ENCODE measurements at regions of chr10 and their contacts with region 1.

Region 1: GRCh38 chr10:73625884-73626752 is 15.2 kb downstream of the MYOZ1 start:
- DNase-seq: peak; percentile 76 to 97 (median 91)
- ATAC-seq: peak; percentile 97
- H3K4me3 ChIP-seq: peak overlapping the region; percentile 99
- H3K4me3 Mint-ChIP-seq: peak overlapping the region; percentile 91 to 100 (median 96)
- H3K27ac ChIP-seq: peak overlapping the region; percentile 87
- H3K27ac Mint-ChIP-seq: peak overlapping the region; percentile 95 to 100 (median 97)
- H3K4me1 ChIP-seq: peaks cover 7 to 9% of the 10 kb centered on the region in 2 donors
- H3K4me1 Mint-ChIP-seq: peaks cover 0 to 29% (median 24%) of the 10 kb centered on the region in 7 donors
- H3K27me3 ChIP-seq: no peaks in the 10 kb centered on the region
- H3K27me3 Mint-ChIP-seq: no peaks in the 10 kb centered on the region

Region 2: GRCh38 chr10:71659111-71659634 is 1966.9 kb before region 1 on chr10:
- CTCF ChIA-PET with region 1: no interaction called
- POLR2A ChIA-PET with region 1: no interaction called
- intact Hi-C with region 1: no loop called
- DNase-seq: no peak
- ATAC-seq: no peak
- H3K4me3 ChIP-seq: no peak overlapping the region
- H3K4me3 Mint-ChIP-seq: no peak overlapping the region
- H3K27ac ChIP-seq: no peak overlapping the region
- H3K27ac Mint-ChIP-seq: peak overlapping the region in 1 of 9 donors; percentile 46
- H3K4me1 ChIP-seq: no peaks in the 10 kb centered on the region
- H3K4me1 Mint-ChIP-seq: peaks cover 0 to 2% (median 0%) of the 10 kb centered on the region in 7 donors
- H3K27me3 ChIP-seq: no peaks in the 10 kb centered on the region
- H3K27me3 Mint-ChIP-seq: no peaks in the 10 kb centered on the region

Region 3: GRCh38 chr10:72913287-72913686 is 712.8 kb before region 1 on chr10:
- CTCF ChIA-PET with region 1: no interaction called
- POLR2A ChIA-PET with region 1: no interaction called
- intact Hi-C with region 1: no loop called
- DNase-seq: no peak
- ATAC-seq: no peak
- H3K4me3 ChIP-seq: no peak overlapping the region
- H3K4me3 Mint-ChIP-seq: no peak overlapping the region
- H3K27ac ChIP-seq: no peak overlapping the region
- H3K27ac Mint-ChIP-seq: no peak overlapping the region
- H3K4me1 ChIP-seq: no peaks in the 10 kb centered on the region
- H3K4me1 Mint-ChIP-seq: no peaks in the 10 kb centered on the region
- H3K27me3 ChIP-seq: no peaks in the 10 kb centered on the region
- H3K27me3 Mint-ChIP-seq: peaks cover 0 to 7% (median 3%) of the 10 kb centered on the region in 5 donors

Region 4: DNA sequence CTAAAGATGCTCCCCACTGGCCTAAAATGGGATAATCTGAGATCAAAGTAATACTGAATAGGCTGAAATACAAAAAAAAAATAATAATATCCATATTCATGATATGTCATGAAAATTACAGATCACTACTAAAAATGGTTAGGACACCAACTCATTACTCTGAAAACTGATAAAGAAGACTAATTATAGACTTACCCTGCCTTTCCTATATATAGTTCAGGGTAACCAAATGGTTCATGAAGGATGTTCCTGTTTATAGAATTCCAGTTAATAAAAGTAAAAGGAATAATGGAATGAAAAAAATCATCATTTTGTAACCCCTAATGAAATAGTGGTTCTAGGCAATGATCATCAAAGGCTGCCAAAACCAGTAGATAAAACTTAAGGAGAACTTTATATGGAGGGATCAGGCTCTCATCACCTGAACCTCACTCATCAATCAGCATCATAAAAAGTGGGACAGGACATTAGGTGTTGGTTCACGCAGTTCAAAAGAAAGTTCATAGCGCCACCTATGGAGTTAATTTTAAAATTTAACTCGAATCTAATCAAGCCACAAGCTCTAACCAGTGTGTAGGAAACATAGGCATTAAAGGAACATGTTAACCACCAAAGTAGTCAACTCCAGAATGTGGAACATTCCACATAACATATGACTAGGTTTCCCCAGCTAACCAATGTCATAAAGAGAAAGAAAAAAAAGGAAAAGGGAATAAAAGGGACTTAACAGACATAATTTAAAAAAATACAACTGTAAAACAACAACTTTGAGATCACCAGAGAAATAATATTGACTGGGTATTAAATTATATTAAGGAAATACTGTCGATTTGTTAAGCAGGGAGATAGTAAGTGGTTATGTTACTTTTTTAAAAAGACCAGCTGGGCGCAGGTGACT is 565.1 kb before region 1 on chr10:
- CTCF ChIA-PET with region 1: no interaction called
- POLR2A ChIA-PET with region 1: no interaction called
- intact Hi-C with region 1: no loop called
- DNase-seq: peak in 4 of 9 donors; percentile 4 to 37 (median 12)
- ATAC-seq: peak; percentile 49
- H3K4me3 ChIP-seq: no peak overlapping the region
- H3K4me3 Mint-ChIP-seq: no peak overlapping the region
- H3K27ac ChIP-seq: no peak overlapping the region
- H3K27ac Mint-ChIP-seq: peak overlapping the region in 1 of 9 donors; percentile 21
- H3K4me1 ChIP-seq: peaks cover 0 to 3% of the 10 kb centered on the region in 2 donors
- H3K4me1 Mint-ChIP-seq: peaks cover 4 to 19% (median 10%) of the 10 kb centered on the region in 7 donors
- H3K27me3 ChIP-seq: no peaks in the 10 kb centered on the region
- H3K27me3 Mint-ChIP-seq: no peaks in the 10 kb centered on the region

Region 5: DNA sequence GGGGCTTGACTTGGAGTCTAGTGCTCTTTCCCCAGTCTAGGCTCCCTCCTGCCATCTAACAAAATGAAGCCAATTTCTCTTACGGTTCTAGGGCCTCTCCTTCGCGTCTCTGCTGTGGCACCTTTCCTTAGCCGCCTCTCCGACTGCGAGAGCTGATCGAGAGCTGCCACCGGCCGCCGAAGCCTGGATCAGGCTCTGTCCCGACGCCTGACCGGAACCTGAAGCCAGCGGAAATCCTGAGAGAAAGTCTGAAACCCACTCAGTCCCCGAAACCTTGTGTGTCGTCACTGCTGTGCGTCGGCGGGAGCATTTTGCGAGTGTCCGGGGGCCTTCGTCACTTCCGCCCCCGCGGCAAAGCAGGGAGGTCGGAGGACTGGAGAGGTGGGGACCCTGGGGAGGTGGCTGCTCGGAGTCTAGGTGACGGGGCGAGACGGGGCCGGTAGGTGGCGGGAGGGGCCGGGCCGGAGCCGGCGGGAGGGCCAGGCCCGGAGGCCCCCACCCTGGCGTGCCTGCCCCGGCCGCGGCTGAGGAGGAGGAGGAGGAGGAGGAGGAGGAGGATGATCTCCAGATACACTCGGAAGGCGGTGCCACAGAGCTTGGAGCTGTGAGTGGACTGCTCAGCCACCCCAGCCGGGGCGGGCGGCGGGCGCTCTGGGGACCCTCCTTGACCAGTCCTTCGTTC is 458.2 kb before region 1 on chr10 and contains the starts of genes ECD and FAM149B1:
- CTCF ChIA-PET with region 1: no interaction called
- POLR2A ChIA-PET with region 1: no interaction called
- intact Hi-C with region 1: loop called (anchors 5 kb)
- DNase-seq: peak; percentile 86 to 93 (median 92)
- ATAC-seq: peak; percentile 97
- H3K4me3 ChIP-seq: peak within 1 kb of the TSS; percentile 97
- H3K4me3 Mint-ChIP-seq: peak within 1 kb of the TSS; percentile 92 to 100 (median 100)
- H3K27ac ChIP-seq: peak within 1 kb of the TSS; percentile 95
- H3K27ac Mint-ChIP-seq: peak within 1 kb of the TSS; percentile 98 to 100 (median 99)
- H3K4me1 ChIP-seq: peaks cover 29 to 33% of the 10 kb centered on the region in 2 donors
- H3K4me1 Mint-ChIP-seq: peaks cover 30 to 56% (median 43%) of the 10 kb centered on the region in 7 donors
- H3K27me3 ChIP-seq: no peaks in the 10 kb centered on the region
- H3K27me3 Mint-ChIP-seq: no peaks in the 10 kb centered on the region
- total RNA-seq, gene ECD: 30.2 to 42.7 (median 33.1) TPM
- total RNA-seq, gene FAM149B1: 13.7 to 21.0 (median 16.3) TPM

Region 6: GRCh38 chr10:73358331-73359279 is 267.5 kb before region 1 on chr10 and contains the start of gene CFAP70:
- CTCF ChIA-PET with region 1: no interaction called
- POLR2A ChIA-PET with region 1: no interaction called
- intact Hi-C with region 1: loop called (anchors 1 to 2 kb)
- DNase-seq: peak; percentile 79 to 97 (median 95)
- ATAC-seq: peak; percentile 97
- H3K4me3 ChIP-seq: peak within 1 kb of the TSS; percentile 70
- H3K4me3 Mint-ChIP-seq: peak within 1 kb of the TSS; percentile 91 to 99 (median 94)
- H3K27ac ChIP-seq: peak within 1 kb of the TSS; percentile 85
- H3K27ac Mint-ChIP-seq: peak within 1 kb of the TSS; percentile 92 to 99 (median 97)
- H3K4me1 ChIP-seq: peaks cover 4 to 5% of the 10 kb centered on the region in 2 donors
- H3K4me1 Mint-ChIP-seq: peaks cover 11 to 20% (median 18%) of the 10 kb centered on the region in 7 donors
- H3K27me3 ChIP-seq: no peaks in the 10 kb centered on the region
- H3K27me3 Mint-ChIP-seq: peaks cover 0 to 23% (median 0%) of the 10 kb centered on the region in 5 donors
- total RNA-seq, gene CFAP70: 0.80 to 5.4 (median 4.6) TPM

Region 7: DNA sequence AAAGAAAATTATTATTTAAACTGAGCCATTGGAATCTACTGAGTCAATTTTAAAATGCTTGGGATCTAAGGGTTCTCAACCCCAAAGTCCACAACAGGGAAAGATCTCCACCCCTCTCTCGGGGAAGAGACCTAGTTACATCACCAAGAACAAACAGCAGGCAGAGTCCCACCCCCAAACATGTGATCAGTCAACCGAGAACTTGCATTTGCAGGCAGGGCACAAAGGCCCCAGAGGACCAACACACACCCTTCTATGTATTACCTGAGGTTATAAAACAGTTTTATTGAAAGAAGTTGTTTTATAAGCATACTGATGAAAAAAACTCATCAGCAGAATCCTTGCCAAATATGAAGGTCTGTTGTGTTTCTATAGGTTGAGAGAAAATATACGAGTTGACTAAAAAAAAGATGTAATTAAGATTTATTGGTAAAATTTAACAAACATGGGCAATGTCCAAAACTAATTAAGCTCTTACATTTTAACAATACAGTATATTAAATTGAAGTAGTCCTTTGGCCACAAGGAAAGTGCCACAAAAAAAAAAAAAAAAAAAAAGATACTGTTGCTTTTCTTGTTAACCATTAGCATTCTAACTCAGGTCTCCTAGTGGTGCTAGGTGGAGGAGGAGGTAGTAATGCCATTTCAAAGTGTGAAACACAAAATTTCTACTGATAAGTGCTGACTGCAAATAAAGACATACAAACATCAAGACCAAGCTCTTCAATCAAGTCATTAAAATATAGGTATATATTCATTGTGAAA is 34.0 kb before region 1 on chr10:
- CTCF ChIA-PET with region 1: no interaction called
- POLR2A ChIA-PET with region 1: no interaction called
- intact Hi-C with region 1: loop called (anchors 1 to 2 kb)
- DNase-seq: peak in 4 of 9 donors; percentile 6 to 28 (median 14)
- ATAC-seq: peak; percentile 66
- H3K4me3 ChIP-seq: no peak overlapping the region
- H3K4me3 Mint-ChIP-seq: peak overlapping the region; percentile 34 to 84 (median 70)
- H3K27ac ChIP-seq: peak overlapping the region; percentile 31
- H3K27ac Mint-ChIP-seq: peak overlapping the region; percentile 58 to 84 (median 78)
- H3K4me1 ChIP-seq: peaks cover 0 to 17% of the 10 kb centered on the region in 2 donors
- H3K4me1 Mint-ChIP-seq: peaks cover 12 to 32% (median 27%) of the 10 kb centered on the region in 7 donors
- H3K27me3 ChIP-seq: no peaks in the 10 kb centered on the region
- H3K27me3 Mint-ChIP-seq: no peaks in the 10 kb centered on the region

Region 8: GRCh38 chr10:73772280-73773151 is 146.4 kb after region 1 on chr10:
- CTCF ChIA-PET with region 1: no interaction called
- POLR2A ChIA-PET with region 1: no interaction called
- intact Hi-C with region 1: loop called in 1 of 2 experiments (anchors 2 kb)
- DNase-seq: peak; percentile 75 to 90 (median 83)
- ATAC-seq: peak; percentile 80
- H3K4me3 ChIP-seq: peak overlapping the region; percentile 69
- H3K4me3 Mint-ChIP-seq: peak overlapping the region; percentile 87 to 97 (median 95)
- H3K27ac ChIP-seq: peak overlapping the region; percentile 85
- H3K27ac Mint-ChIP-seq: peak overlapping the region; percentile 89 to 97 (median 94)
- H3K4me1 ChIP-seq: peaks cover 27 to 30% of the 10 kb centered on the region in 2 donors
- H3K4me1 Mint-ChIP-seq: peaks cover 34 to 73% (median 64%) of the 10 kb centered on the region in 7 donors
- H3K27me3 ChIP-seq: no peaks in the 10 kb centered on the region
- H3K27me3 Mint-ChIP-seq: no peaks in the 10 kb centered on the region

Region 9: GRCh38 chr10:73879296-73880173 is 253.4 kb after region 1 on chr10:
- CTCF ChIA-PET with region 1: no interaction called
- POLR2A ChIA-PET with region 1: no interaction called
- intact Hi-C with region 1: loop called in 1 of 2 experiments (anchors 5 kb)
- DNase-seq: peak; percentile 91 to 98 (median 96)
- ATAC-seq: peak; percentile 97
- H3K4me3 ChIP-seq: no peak overlapping the region
- H3K4me3 Mint-ChIP-seq: peak overlapping the region in 5 of 10 donors; percentile 0 to 40 (median 1)
- H3K27ac ChIP-seq: peak overlapping the region; percentile 68
- H3K27ac Mint-ChIP-seq: peak overlapping the region; percentile 30 to 98 (median 89)
- H3K4me1 ChIP-seq: peaks cover 18 to 22% of the 10 kb centered on the region in 2 donors
- H3K4me1 Mint-ChIP-seq: peaks cover 14 to 51% (median 41%) of the 10 kb centered on the region in 7 donors
- H3K27me3 ChIP-seq: no peaks in the 10 kb centered on the region
- H3K27me3 Mint-ChIP-seq: peaks cover 0 to 5% (median 0%) of the 10 kb centered on the region in 5 donors

Region 10: DNA sequence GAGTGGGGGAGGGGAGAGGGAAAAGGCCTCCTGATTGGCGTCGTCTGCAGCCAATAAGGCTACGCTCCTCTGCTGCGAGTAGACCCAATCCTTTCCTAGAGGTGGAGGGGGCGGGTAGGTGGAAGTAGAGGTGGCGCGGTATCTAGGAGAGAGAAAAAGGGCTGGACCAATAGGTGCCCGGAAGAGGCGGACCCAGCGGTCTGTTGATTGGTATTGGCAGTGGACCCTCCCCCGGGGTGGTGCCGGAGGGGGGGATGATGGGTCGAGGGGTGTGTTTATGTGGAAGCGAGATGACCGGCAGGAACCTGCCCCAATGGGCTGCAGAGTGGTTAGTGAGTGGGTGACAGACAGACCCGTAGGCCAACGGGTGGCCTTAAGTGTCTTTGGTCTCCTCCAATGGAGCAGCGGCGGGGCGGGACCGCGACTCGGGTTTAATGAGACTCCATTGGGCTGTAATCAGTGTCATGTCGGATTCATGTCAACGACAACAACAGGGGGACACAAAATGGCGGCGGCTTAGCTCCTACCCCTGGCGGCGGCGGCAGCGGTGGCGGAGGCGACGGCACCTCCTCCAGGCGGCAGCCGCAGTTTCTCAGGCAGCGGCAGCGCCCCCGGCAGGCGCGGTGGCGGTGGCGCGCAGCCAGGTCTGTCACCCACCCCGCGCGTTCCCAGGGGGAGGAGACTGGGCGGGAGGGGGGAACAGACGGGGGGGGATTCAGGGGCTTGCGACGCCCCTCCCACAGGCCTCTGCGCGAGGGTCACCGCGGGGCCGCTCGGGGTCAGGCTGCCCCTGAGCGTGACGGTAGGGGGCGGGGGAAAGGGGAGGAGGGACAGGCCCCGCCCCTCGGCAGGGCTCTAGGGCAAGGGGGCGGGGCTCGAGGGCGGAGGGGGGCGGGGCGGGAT is 1200.3 kb after region 1 on chr10 and contains the start of gene KAT6B:
- CTCF ChIA-PET with region 1: no interaction called
- POLR2A ChIA-PET with region 1: no interaction called
- intact Hi-C with region 1: loop called in 1 of 2 experiments (anchors 5 kb)
- DNase-seq: peak; percentile 93 to 100 (median 100)
- ATAC-seq: peak; percentile 86
- H3K4me3 ChIP-seq: peak within 1 kb of the TSS; percentile 86
- H3K4me3 Mint-ChIP-seq: peak within 1 kb of the TSS; percentile 90 to 98 (median 92)
- H3K27ac ChIP-seq: peak within 1 kb of the TSS; percentile 98
- H3K27ac Mint-ChIP-seq: peak within 1 kb of the TSS; percentile 92 to 99 (median 98)
- H3K4me1 ChIP-seq: peaks cover 22 to 50% of the 10 kb centered on the region in 2 donors
- H3K4me1 Mint-ChIP-seq: peaks cover 44 to 74% (median 69%) of the 10 kb centered on the region in 7 donors
- H3K27me3 ChIP-seq: no peaks in the 10 kb centered on the region
- H3K27me3 Mint-ChIP-seq: no peaks in the 10 kb centered on the region
- total RNA-seq, gene KAT6B: 33.2 to 80.5 (median 68.5) TPM

Region 11: DNA sequence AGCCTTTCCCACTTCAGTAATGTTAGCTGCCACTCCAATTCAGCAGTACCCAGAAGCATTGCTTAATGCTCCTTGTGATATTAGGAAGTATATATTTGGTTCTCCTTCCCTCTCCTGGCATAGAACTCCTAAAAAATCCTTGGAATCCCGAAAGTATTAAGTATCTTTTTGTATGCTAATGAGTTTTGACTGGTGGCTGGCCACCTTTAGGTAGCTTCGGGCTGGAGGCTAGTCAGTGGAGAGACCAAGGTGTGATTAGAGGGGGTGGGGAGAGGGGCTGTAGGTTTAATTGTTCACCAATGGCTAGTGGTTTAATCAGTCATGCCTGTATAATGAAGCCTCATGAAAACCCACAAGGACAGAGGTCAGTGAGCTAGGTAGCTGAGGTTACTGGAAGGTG is 1597.4 kb after region 1 on chr10:
- CTCF ChIA-PET with region 1: no interaction called
- POLR2A ChIA-PET with region 1: no interaction called
- intact Hi-C with region 1: no loop called
- DNase-seq: no peak
- ATAC-seq: no peak
- H3K4me3 ChIP-seq: no peak overlapping the region
- H3K4me3 Mint-ChIP-seq: no peak overlapping the region
- H3K27ac ChIP-seq: peak overlapping the region; percentile 49
- H3K27ac Mint-ChIP-seq: peak overlapping the region in 8 of 9 donors; percentile 66 to 90 (median 77)
- H3K4me1 ChIP-seq: peaks cover 0 to 9% of the 10 kb centered on the region in 2 donors
- H3K4me1 Mint-ChIP-seq: peaks cover 20 to 65% (median 63%) of the 10 kb centered on the region in 7 donors
- H3K27me3 ChIP-seq: no peaks in the 10 kb centered on the region
- H3K27me3 Mint-ChIP-seq: no peaks in the 10 kb centered on the region